Activated CD4-positive, alpha-beta memory T cell treated with anti-CD3 and anti-CD28 coated beads for 36 hours (primary cell): ENCODE measurements at regions of chr14 and their contacts with region 1.

Region 1: DNA sequence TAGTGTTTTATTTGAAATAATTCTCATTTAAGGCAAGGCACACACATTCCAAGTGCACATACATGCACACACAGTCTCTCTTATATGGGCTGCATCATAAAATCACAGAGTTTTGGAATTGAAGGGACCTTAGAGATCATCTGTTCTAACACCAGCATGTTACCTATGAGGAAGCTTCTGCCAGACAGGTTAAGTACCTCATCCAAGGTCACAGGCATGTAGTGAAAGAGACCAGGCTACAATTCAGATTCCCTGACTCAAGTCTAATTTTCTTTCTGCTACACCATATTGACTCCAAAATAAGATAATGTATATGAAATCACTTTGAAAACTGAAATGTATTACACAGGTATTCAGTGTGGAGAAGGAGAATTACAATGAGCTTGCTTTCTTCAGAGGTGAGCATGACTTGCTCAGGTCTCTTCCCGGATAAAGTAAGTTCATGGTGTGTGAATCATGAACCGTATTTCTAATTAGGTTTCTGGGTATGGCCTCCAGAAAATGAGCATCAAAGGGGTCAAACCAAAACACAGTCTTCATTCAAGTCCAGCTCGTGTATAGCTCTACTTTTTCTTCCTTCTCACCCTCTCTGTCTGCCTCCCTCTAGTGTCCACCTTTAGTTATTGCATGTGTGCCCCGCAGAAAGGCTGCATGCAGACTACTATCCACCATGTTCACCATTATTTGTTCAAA is 411.9 kb downstream of the FUT8 start:
- DNase-seq: peak; percentile 66
- H3K4me3 Mint-ChIP-seq: no peak overlapping the region
- H3K27ac Mint-ChIP-seq: no peak overlapping the region
- H3K4me1 Mint-ChIP-seq: peaks cover 5% of the 10 kb centered on the region
- H3K27me3 Mint-ChIP-seq: no peaks in the 10 kb centered on the region

Region 2: DNA sequence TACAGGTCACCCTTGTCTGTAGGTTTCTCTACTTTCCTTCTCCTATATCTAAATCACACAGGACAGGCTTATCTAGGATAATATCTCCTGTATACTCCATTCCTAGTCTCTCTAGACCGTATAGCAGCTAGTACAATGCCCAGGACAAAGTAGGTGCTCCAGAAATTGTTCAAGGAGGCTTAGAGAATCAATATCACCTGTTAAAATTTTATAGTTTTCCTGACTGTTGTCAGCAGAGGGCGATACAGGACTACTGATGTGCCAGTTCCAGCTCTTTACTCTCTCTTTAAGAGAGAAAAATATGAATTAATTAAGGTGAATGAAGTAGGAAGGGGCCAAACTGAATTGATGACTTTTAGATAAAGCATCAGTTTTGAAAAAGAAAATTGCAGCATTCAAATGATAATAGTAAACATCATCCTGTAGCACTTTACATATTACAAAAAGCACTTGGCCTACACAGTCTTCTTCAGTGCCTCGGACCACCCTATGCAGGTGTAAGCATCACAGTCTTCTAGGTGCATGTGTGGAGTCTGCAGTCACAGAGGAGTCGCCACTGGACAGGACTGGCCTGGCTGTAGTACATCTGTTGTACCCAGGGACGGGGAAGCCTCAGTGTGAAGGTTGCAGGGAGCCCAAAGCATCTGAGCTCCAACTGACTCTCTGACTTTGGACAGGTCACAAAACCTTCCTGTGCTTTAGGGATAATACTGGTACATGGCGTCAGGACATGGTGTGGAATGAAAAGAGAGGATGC is 660.2 kb before region 1 on chr14:
- CTCF ChIA-PET with region 1: interaction called, 40 read pairs
- POLR2A ChIA-PET with region 1: no interaction called
- intact Hi-C with region 1: loop called (anchors 1 kb)
- DNase-seq: peak; percentile 36
- H3K4me3 Mint-ChIP-seq: no peak overlapping the region
- H3K27ac Mint-ChIP-seq: no peak overlapping the region
- H3K4me1 Mint-ChIP-seq: peaks cover 5% of the 10 kb centered on the region
- H3K27me3 Mint-ChIP-seq: no peaks in the 10 kb centered on the region

Region 3: DNA sequence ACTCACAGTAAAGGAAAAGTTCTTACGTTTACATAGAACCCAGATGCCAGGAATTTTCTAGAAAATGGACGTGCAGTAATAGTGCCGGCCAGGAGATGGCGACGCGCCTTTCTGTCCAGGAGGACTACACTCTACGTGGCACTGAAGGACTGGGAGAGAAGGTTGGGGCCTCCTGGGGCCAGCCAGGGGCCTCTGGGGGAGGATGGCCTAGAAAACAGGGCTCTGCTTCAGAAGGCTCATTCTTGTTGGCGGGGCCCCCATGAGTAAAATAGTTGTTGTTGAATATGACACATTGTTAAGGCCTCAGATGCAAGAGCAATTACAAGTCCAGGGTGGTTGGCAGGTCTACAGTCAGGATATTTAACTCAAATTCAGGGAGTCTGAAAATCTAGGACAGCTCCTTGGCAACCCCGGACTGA is 602.0 kb before region 1 on chr14:
- CTCF ChIA-PET with region 1: interaction called, 5 read pairs
- POLR2A ChIA-PET with region 1: no interaction called
- intact Hi-C with region 1: loop called (anchors 2 kb)
- DNase-seq: peak; percentile 78
- H3K4me3 Mint-ChIP-seq: no peak overlapping the region
- H3K27ac Mint-ChIP-seq: peak overlapping the region; percentile 45
- H3K4me1 Mint-ChIP-seq: peaks cover 33% of the 10 kb centered on the region
- H3K27me3 Mint-ChIP-seq: no peaks in the 10 kb centered on the region

Region 4: GRCh38 chr14:65419619-65420252 is 404.7 kb before region 1 on chr14:
- CTCF ChIA-PET with region 1: interaction called, 130 read pairs
- POLR2A ChIA-PET with region 1: interaction called, 7 read pairs
- intact Hi-C with region 1: loop called (anchors 1 kb)
- DNase-seq: no peak
- H3K4me3 Mint-ChIP-seq: no peak overlapping the region
- H3K27ac Mint-ChIP-seq: no peak overlapping the region
- H3K4me1 Mint-ChIP-seq: peaks cover 28% of the 10 kb centered on the region
- H3K27me3 Mint-ChIP-seq: no peaks in the 10 kb centered on the region

Region 5: GRCh38 chr14:65804752-65805473 is 19.5 kb before region 1 on chr14:
- CTCF ChIA-PET with region 1: interaction called, 32 read pairs
- POLR2A ChIA-PET with region 1: no interaction called
- intact Hi-C with region 1: loop called (anchors 2 kb)
- DNase-seq: peak; percentile 26
- H3K4me3 Mint-ChIP-seq: no peak overlapping the region
- H3K27ac Mint-ChIP-seq: no peak overlapping the region
- H3K4me1 Mint-ChIP-seq: peaks cover 8% of the 10 kb centered on the region
- H3K27me3 Mint-ChIP-seq: no peaks in the 10 kb centered on the region

Region 6: DNA sequence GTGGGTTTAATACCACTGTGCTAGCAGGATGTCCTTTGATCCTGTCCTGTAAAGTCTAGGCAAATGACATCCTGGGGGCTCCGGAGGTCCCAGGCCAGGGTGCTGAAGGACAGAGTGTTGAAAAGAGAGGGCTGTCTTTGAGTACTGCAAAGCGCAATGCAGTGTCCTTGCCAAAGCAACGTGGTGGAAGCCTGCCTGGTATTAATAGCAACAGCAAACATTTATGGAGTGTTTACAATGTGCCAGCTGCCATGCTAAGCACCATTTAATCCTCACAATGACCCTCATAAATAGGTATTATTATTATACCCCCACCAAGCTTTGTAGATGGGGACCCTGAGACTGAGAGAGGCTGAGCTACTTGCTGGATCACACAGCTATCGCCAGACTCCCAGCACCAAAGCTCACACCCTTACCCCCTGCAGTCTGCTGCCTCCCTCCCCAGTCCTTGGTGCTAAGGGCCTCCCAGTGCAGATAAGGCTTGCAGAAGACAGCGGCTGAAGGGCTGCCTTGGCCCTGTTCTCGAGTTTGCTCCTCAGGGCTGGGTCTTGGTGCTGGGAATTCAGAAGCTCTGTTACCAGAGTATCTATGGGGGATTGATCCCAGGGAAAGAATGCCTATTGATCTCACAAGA is 15.8 kb after region 1 on chr14:
- CTCF ChIA-PET with region 1: interaction called, 20 read pairs
- POLR2A ChIA-PET with region 1: no interaction called
- intact Hi-C with region 1: no loop called
- DNase-seq: no peak
- H3K4me3 Mint-ChIP-seq: no peak overlapping the region
- H3K27ac Mint-ChIP-seq: no peak overlapping the region
- H3K4me1 Mint-ChIP-seq: peaks cover 47% of the 10 kb centered on the region
- H3K27me3 Mint-ChIP-seq: no peaks in the 10 kb centered on the region

Region 7: GRCh38 chr14:65940056-65940733 is 115.8 kb after region 1 on chr14:
- CTCF ChIA-PET with region 1: interaction called, 10 read pairs
- POLR2A ChIA-PET with region 1: no interaction called
- intact Hi-C with region 1: no loop called
- DNase-seq: peak; percentile 48
- H3K4me3 Mint-ChIP-seq: no peak overlapping the region
- H3K27ac Mint-ChIP-seq: no peak overlapping the region
- H3K4me1 Mint-ChIP-seq: peaks cover 35% of the 10 kb centered on the region
- H3K27me3 Mint-ChIP-seq: no peaks in the 10 kb centered on the region